ENCODE measurements at regions of chr16 and their contacts with region 1.

Region 1: GRCh38 chr16:22898874-22899348 is 84.9 kb downstream of the HS3ST2 start:
- DNase-seq: peak; percentile 56
- ATAC-seq: peak; percentile 62
- H3K4me3 ChIP-seq: no peak overlapping the region
- H3K27ac ChIP-seq: no peak overlapping the region
- H3K4me1 ChIP-seq: no peaks in the 10 kb centered on the region
- H3K27me3 ChIP-seq: no peaks in the 10 kb centered on the region; the same call in 1 of the 2 replicates
- CTCF ChIP-seq: peak; percentile 70
- POLR2A ChIP-seq: no peak
- RAD21 ChIP-seq: peak; percentile 70

Region 2: DNA sequence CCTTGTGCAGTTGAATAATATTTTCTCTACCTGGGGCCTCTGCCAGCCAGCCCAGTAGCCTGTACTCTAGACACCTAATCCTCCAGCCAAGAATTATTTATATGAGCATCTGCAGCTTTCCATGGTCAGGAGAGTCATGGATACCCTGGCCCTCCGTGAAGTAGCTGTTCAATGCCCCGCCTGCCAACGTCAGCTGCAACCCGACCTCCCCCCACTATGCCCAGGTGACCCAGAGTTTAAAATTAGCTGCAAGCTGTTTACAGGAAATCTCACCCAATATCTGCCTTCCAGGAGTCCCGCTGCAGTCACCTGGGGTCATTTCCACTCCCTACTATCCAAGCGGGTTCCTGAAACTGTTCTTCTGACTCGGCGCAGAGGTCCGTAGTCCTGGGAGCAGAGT is 724.3 kb before region 1 on chr16:
- CTCF ChIA-PET with region 1: no interaction called
- POLR2A ChIA-PET with region 1: no interaction called
- dilution Hi-C with region 1: no loop called
- in situ Hi-C with region 1: no loop called
- intact Hi-C with region 1: no loop called
- DNase-seq: no peak
- ATAC-seq: no peak
- H3K4me3 ChIP-seq: no peak overlapping the region
- H3K27ac ChIP-seq: no peak overlapping the region
- H3K4me1 ChIP-seq: no peaks in the 10 kb centered on the region
- H3K27me3 ChIP-seq: peaks cover 16% of the 10 kb centered on the region; the same call in 1 of the 2 replicates
- CTCF ChIP-seq: no peak
- POLR2A ChIP-seq: no peak
- RAD21 ChIP-seq: no peak

Region 3: GRCh38 chr16:22797551-22797950 is 101.4 kb before region 1 on chr16:
- CTCF ChIA-PET with region 1: no interaction called
- POLR2A ChIA-PET with region 1: no interaction called
- dilution Hi-C with region 1: no loop called
- in situ Hi-C with region 1: no loop called
- intact Hi-C with region 1: no loop called
- DNase-seq: no peak
- ATAC-seq: no peak
- H3K4me3 ChIP-seq: no peak overlapping the region
- H3K27ac ChIP-seq: no peak overlapping the region
- H3K4me1 ChIP-seq: no peaks in the 10 kb centered on the region
- H3K27me3 ChIP-seq: no peaks in the 10 kb centered on the region
- CTCF ChIP-seq: no peak
- POLR2A ChIP-seq: no peak
- RAD21 ChIP-seq: no peak

Region 4: DNA sequence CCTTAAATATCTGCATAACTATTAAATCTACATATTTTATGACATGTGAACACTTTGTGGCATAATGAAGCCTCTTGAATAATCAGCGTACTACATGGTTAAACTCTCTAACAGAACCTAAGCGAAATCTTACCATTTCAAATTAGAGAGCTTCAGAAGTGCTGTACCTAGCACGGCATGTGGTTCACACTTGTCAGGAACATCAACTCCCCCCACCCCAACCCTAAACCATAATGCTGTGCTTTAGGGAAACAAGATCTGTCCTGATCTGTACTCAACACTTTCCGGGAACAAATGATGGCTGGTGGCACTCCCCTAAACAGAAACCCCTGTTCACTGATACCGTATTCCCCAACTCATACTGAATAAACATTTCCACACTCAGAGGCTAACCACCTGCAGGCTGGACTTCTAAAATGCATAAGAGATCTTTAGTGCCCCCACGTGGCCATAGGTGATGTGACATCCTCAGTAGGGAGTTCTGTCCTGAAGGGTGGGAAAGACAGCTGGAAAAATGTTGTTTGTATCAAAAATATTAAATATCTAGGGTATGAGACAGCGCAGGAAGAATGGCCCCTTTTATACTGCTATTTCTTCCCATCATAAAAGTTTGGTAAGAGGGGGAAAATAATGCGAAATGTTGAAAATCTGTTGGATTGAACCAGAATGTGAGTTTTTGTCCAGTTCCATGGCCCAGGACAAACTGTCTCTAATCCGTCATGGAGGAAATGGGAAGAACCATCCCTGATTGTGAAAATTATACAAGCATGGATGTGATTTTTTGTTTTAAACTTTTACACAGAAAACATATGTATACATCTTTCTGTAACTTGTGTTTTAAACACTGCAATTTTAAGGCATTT is 161.8 kb after region 1 on chr16:
- CTCF ChIA-PET with region 1: interaction called, 3 read pairs
- POLR2A ChIA-PET with region 1: no interaction called
- dilution Hi-C with region 1: no loop called
- in situ Hi-C with region 1: no loop called
- intact Hi-C with region 1: loop called (anchors 1 kb)
- DNase-seq: peak; percentile 77
- ATAC-seq: peak; percentile 96
- H3K4me3 ChIP-seq: no peak overlapping the region
- H3K27ac ChIP-seq: no peak overlapping the region
- H3K4me1 ChIP-seq: no peaks in the 10 kb centered on the region
- H3K27me3 ChIP-seq: no peaks in the 10 kb centered on the region; the same call in 1 of the 2 replicates
- CTCF ChIP-seq: peak; percentile 79
- POLR2A ChIP-seq: no peak
- RAD21 ChIP-seq: peak; percentile 66

Measured in IMR-90 (cell line).